Natural killer cell (primary cell): ENCODE measurements at regions of chr7 and their contacts with region 1.

Region 1: GRCh38 chr7:102404005-102404861 is 8.1 kb downstream of the PRKRIP1 start:
- DNase-seq: peak; percentile 43 to 82
- ATAC-seq: peak; percentile 99 to 100 (median 99)
- H3K4me3 ChIP-seq: no peak overlapping the region
- H3K4me3 Mint-ChIP-seq: peak overlapping the region; percentile 17
- H3K27ac ChIP-seq: no peak overlapping the region
- H3K27ac Mint-ChIP-seq: peak overlapping the region; percentile 41 to 58
- H3K4me1 ChIP-seq: peaks cover 12% of the 10 kb centered on the region
- H3K4me1 Mint-ChIP-seq: peaks cover 9 to 23% of the 10 kb centered on the region in 2 donors
- H3K27me3 ChIP-seq: no peaks in the 10 kb centered on the region
- H3K27me3 Mint-ChIP-seq: no peaks in the 10 kb centered on the region
- CTCF ChIP-seq: peak; percentile 73

Region 2: GRCh38 chr7:102248456-102249395 is 155.5 kb before region 1 on chr7:
- intact Hi-C with region 1: no loop called
- DNase-seq: no peak
- ATAC-seq: no peak
- H3K4me3 ChIP-seq: no peak overlapping the region
- H3K4me3 Mint-ChIP-seq: no peak overlapping the region
- H3K27ac ChIP-seq: no peak overlapping the region
- H3K27ac Mint-ChIP-seq: no peak overlapping the region
- H3K4me1 ChIP-seq: no peaks in the 10 kb centered on the region
- H3K4me1 Mint-ChIP-seq: peaks cover 12 to 14% of the 10 kb centered on the region in 2 donors
- H3K27me3 ChIP-seq: no peaks in the 10 kb centered on the region
- H3K27me3 Mint-ChIP-seq: no peaks in the 10 kb centered on the region
- CTCF ChIP-seq: no peak

Region 3: GRCh38 chr7:102260856-102261255 is 143.4 kb before region 1 on chr7:
- intact Hi-C with region 1: no loop called
- DNase-seq: no peak
- ATAC-seq: no peak
- H3K4me3 ChIP-seq: no peak overlapping the region
- H3K4me3 Mint-ChIP-seq: no peak overlapping the region
- H3K27ac ChIP-seq: no peak overlapping the region
- H3K27ac Mint-ChIP-seq: no peak overlapping the region
- H3K4me1 ChIP-seq: no peaks in the 10 kb centered on the region
- H3K4me1 Mint-ChIP-seq: no peaks in the 10 kb centered on the region
- H3K27me3 ChIP-seq: no peaks in the 10 kb centered on the region
- H3K27me3 Mint-ChIP-seq: no peaks in the 10 kb centered on the region
- CTCF ChIP-seq: no peak

Region 4: GRCh38 chr7:102433219-102434038 is 29.2 kb after region 1 on chr7 and contains the start of gene ORAI2:
- intact Hi-C with region 1: loop called (anchors 2 kb)
- DNase-seq: peak; percentile 86 to 92
- ATAC-seq: peak; percentile 66 to 86 (median 81)
- H3K4me3 ChIP-seq: peak within 1 kb of the TSS; percentile 94
- H3K4me3 Mint-ChIP-seq: peak within 1 kb of the TSS; percentile 91
- H3K27ac ChIP-seq: peak within 1 kb of the TSS; percentile 98
- H3K27ac Mint-ChIP-seq: peak within 1 kb of the TSS; percentile 84 to 100
- H3K4me1 ChIP-seq: peaks cover 61% of the 10 kb centered on the region
- H3K4me1 Mint-ChIP-seq: peaks cover 36 to 52% of the 10 kb centered on the region in 2 donors
- H3K27me3 ChIP-seq: no peaks in the 10 kb centered on the region
- H3K27me3 Mint-ChIP-seq: no peaks in the 10 kb centered on the region
- CTCF ChIP-seq: no peak
- total RNA-seq, gene ORAI2: 39.1 to 55.0 (median 41.3) TPM

Region 5: DNA sequence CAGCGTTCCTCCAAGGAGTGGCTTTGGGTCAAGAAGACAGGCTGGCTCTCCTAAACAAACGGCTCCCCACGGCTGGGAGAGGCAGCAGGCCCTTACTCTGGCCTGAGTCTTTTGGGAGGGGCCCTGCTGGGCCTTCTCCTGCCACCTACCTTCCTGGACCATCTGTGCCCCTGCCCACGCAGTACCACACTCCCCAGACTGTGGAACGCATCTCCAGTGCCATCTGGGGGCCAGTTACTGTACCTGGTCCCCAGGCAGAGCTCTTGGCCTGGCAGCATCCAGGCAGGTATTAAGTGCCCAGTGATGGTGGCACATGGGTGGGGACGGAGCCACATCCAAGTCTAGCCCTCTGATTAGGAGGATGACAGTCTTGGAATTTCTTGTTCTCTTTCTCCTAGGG is 46.0 kb after region 1 on chr7:
- intact Hi-C with region 1: loop called (anchors 1 kb)
- DNase-seq: peak in 1 of 2 donors; percentile 76
- ATAC-seq: peak; percentile 60 to 81 (median 75)
- H3K4me3 ChIP-seq: no peak overlapping the region
- H3K4me3 Mint-ChIP-seq: no peak overlapping the region
- H3K27ac ChIP-seq: no peak overlapping the region
- H3K27ac Mint-ChIP-seq: no peak overlapping the region
- H3K4me1 ChIP-seq: no peaks in the 10 kb centered on the region
- H3K4me1 Mint-ChIP-seq: peaks cover 0 to 9% of the 10 kb centered on the region in 2 donors
- H3K27me3 ChIP-seq: no peaks in the 10 kb centered on the region
- H3K27me3 Mint-ChIP-seq: no peaks in the 10 kb centered on the region
- CTCF ChIP-seq: peak; percentile 17

Region 6: GRCh38 chr7:102464577-102465280 is 60.5 kb after region 1 on chr7 and contains the starts of genes ALKBH4 and LRWD1:
- intact Hi-C with region 1: loop called (anchors 2 kb)
- DNase-seq: peak; percentile 93 to 97
- ATAC-seq: peak; percentile 95 to 99 (median 98)
- H3K4me3 ChIP-seq: peak within 1 kb of the TSS; percentile 98
- H3K4me3 Mint-ChIP-seq: peak within 1 kb of the TSS; percentile 90
- H3K27ac ChIP-seq: peak within 1 kb of the TSS; percentile 53
- H3K27ac Mint-ChIP-seq: peak within 1 kb of the TSS; percentile 72 to 83
- H3K4me1 ChIP-seq: peaks cover 25% of the 10 kb centered on the region
- H3K4me1 Mint-ChIP-seq: peaks cover 12 to 50% of the 10 kb centered on the region in 2 donors
- H3K27me3 ChIP-seq: no peaks in the 10 kb centered on the region
- H3K27me3 Mint-ChIP-seq: no peaks in the 10 kb centered on the region
- CTCF ChIP-seq: peak; percentile 15
- total RNA-seq, gene ALKBH4: 4.1 to 9.2 (median 9.1) TPM
- total RNA-seq, gene LRWD1: 20.0 to 24.1 (median 20.4) TPM